Posterior cingulate gyrus (tissue), 11 donors: ENCODE measurements at regions of chr3 and their contacts with region 1.

Region 1: GRCh38 chr3:52001443-52001974 is 5.8 kb upstream of the RPL29 start:
- DNase-seq: peak; percentile 62 to 97 (median 82)

Region 2: GRCh38 chr3:51860703-51861665 is 140.5 kb before region 1 on chr3 and contains the start of gene IQCF2:
- intact Hi-C with region 1: no loop called
- DNase-seq: no peak

Region 3: GRCh38 chr3:52046186-52046913 is 44.8 kb after region 1 on chr3:
- intact Hi-C with region 1: no loop called
- DNase-seq: peak in 3 of 10 donors; percentile 61 to 93 (median 79)

Region 4: GRCh38 chr3:52123106-52123725 is 121.7 kb after region 1 on chr3:
- intact Hi-C with region 1: loop called (anchors 1 kb)
- DNase-seq: peak; percentile 67 to 98 (median 83)

Region 5: GRCh38 chr3:52144034-52144795 is 142.7 kb after region 1 on chr3:
- intact Hi-C with region 1: loop called (anchors 1 kb)
- DNase-seq: peak; percentile 71 to 97 (median 88)